Activated T-helper 2 cell treated with anti-CD3 and anti-CD28 coated beads, Interferon-gamma antibody, Interleukin-2, Interleukin-4, amounts not matched to agents 10 μg/mL and 5 μg/mL and 100 μg/mL, durations not matched to agents 14 hours and 24 hours and 36 hours (primary cell): ENCODE measurements at regions of chr10 and their contacts with region 1.

Region 1: GRCh38 chr10:3935141-3935540 is 150.1 kb upstream of the KLF6 start:
- DNase-seq: peak; percentile 71
- H3K4me3 Mint-ChIP-seq: peak overlapping the region; percentile 43
- H3K27ac Mint-ChIP-seq: peak overlapping the region; percentile 92
- H3K4me1 Mint-ChIP-seq: peaks cover 58% of the 10 kb centered on the region
- H3K27me3 Mint-ChIP-seq: no peaks in the 10 kb centered on the region

Region 2: GRCh38 chr10:3867454-3868270 is 67.5 kb before region 1 on chr10:
- intact Hi-C with region 1: loop called (anchors 1 kb)
- DNase-seq: no peak
- H3K4me3 Mint-ChIP-seq: no peak overlapping the region
- H3K27ac Mint-ChIP-seq: peak overlapping the region; percentile 88
- H3K4me1 Mint-ChIP-seq: peaks cover 60% of the 10 kb centered on the region
- H3K27me3 Mint-ChIP-seq: no peaks in the 10 kb centered on the region

Region 3: DNA sequence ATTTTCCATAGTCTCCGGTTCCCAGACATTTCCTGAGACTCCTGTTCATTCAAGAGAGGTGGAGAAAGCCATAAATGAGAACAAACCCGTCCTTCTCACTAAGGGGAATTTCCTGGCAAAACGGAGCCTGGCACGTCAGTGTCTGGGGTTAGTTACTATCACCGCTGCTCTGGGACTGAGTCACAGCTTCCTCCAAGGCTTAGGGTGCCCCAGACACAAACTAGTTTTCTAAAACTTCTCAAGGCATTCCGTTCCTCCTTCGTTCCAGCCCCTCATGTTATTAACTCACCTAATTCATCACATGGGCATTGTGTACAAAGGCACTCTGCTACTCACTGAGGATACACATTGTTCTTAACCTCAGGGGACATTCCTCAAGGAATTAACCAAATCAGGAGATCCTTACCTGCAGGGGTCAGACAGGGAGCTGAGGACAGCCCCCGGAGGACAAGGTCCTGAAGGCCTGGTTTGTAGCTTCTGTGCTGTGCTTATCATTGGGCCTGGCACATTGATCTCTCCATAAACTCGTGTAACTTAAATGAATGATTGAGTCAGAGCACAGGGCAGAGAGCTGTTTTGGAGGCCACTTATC is 47.2 kb before region 1 on chr10:
- intact Hi-C with region 1: loop called (anchors 2 kb)
- DNase-seq: no peak
- H3K4me3 Mint-ChIP-seq: peak overlapping the region; percentile 4
- H3K27ac Mint-ChIP-seq: peak overlapping the region; percentile 87
- H3K4me1 Mint-ChIP-seq: peaks cover 49% of the 10 kb centered on the region
- H3K27me3 Mint-ChIP-seq: no peaks in the 10 kb centered on the region

Region 4: DNA sequence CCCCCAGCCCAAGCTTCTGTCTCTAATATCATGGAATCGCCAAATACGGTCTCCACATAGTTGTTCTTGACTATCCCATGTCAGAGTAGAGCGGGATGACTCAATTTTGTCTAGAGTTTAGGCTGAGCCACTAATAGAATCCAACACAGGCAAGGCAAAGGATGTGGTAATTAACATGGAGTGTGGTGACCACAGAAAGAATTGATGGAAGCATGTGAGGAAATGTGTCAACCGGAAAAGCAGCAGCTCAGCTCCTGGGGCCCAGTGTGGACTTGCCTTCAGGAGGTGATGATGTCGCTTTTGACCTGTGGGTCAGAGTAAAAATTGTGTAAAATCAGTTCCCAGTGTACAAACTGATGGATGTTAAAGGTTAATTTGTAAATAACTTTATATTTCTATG is 10.8 kb before region 1 on chr10:
- intact Hi-C with region 1: no loop called
- DNase-seq: no peak
- H3K4me3 Mint-ChIP-seq: no peak overlapping the region
- H3K27ac Mint-ChIP-seq: no peak overlapping the region
- H3K4me1 Mint-ChIP-seq: peaks cover 23% of the 10 kb centered on the region
- H3K27me3 Mint-ChIP-seq: no peaks in the 10 kb centered on the region

Region 5: DNA sequence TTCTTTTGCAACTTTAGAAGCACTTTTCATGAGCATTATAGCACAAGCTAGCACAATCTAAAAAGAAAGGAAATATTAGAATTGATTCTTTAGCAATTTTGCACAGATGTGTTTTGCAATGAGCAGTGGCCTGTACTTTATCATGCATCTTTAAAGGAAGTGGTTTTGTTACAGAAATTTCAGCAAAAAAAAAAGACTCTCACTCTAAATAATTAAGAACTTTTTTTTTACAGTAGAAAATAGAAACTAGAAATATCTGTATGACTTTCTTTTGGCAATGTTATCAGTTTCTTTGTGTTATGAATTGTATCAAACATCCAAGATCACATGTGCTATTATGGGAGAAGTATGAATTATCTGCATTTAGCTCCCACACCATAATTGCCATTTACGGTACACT is 45.5 kb after region 1 on chr10:
- intact Hi-C with region 1: loop called (anchors 2 kb)
- DNase-seq: no peak
- H3K4me3 Mint-ChIP-seq: no peak overlapping the region
- H3K27ac Mint-ChIP-seq: no peak overlapping the region
- H3K4me1 Mint-ChIP-seq: peaks cover 30% of the 10 kb centered on the region
- H3K27me3 Mint-ChIP-seq: no peaks in the 10 kb centered on the region

Region 6: GRCh38 chr10:4046030-4046429 is 110.9 kb after region 1 on chr10:
- intact Hi-C with region 1: no loop called
- DNase-seq: no peak
- H3K4me3 Mint-ChIP-seq: no peak overlapping the region
- H3K27ac Mint-ChIP-seq: no peak overlapping the region
- H3K4me1 Mint-ChIP-seq: no peaks in the 10 kb centered on the region
- H3K27me3 Mint-ChIP-seq: peaks cover 8% of the 10 kb centered on the region

Region 7: GRCh38 chr10:4067531-4067930 is 132.4 kb after region 1 on chr10:
- intact Hi-C with region 1: loop called (anchors 1 kb)
- DNase-seq: no peak
- H3K4me3 Mint-ChIP-seq: no peak overlapping the region
- H3K27ac Mint-ChIP-seq: no peak overlapping the region
- H3K4me1 Mint-ChIP-seq: peaks cover 17% of the 10 kb centered on the region
- H3K27me3 Mint-ChIP-seq: no peaks in the 10 kb centered on the region